WTC11 (cell line): ENCODE measurements at regions of chr7 and their contacts with region 1.

Region 1: DNA sequence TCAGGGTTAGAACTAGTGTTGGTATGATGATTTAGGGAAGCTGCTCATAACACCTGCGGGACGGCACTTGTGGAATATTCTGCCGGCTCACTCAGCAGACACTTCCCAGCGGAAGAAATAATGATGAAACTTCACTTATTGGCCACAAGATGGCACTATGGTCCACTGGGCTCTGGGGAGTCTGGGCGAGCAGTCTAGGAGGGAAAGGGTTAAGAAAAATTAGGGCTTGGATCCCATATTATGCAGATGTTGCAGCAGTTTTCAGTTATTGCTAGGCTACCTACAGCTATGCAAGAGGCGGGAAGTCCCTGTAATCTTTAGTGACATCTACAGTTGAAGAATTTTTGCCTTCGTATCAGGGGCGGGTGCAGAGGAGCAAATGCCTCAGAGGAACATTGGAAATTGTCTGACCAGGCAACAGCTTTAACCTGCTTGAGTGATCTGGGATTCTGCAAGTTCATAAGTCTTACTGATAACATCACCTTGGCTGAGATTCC is 238.7 kb upstream of the PRSS58 start:
- DNase-seq: no peak
- ATAC-seq: peak; percentile 82
- H3K4me3 Mint-ChIP-seq: peak overlapping the region; percentile 45
- H3K27ac Mint-ChIP-seq: no peak overlapping the region
- H3K4me1 Mint-ChIP-seq: no peaks in the 10 kb centered on the region
- H3K27me3 Mint-ChIP-seq: peaks cover 17% of the 10 kb centered on the region
- CTCF ChIP-seq: peak; percentile 74

Region 2: GRCh38 chr7:142478479-142479072 is 18.0 kb before region 1 on chr7:
- CTCF ChIA-PET with region 1: interaction called, 14 read pairs
- POLR2A ChIA-PET with region 1: no interaction called
- DNase-seq: peak; percentile 38
- ATAC-seq: peak; percentile 79
- H3K4me3 Mint-ChIP-seq: no peak overlapping the region
- H3K27ac Mint-ChIP-seq: no peak overlapping the region
- H3K4me1 Mint-ChIP-seq: peaks cover 11% of the 10 kb centered on the region
- H3K27me3 Mint-ChIP-seq: peaks cover 12% of the 10 kb centered on the region
- CTCF ChIP-seq: peak; percentile 62

Region 3: DNA sequence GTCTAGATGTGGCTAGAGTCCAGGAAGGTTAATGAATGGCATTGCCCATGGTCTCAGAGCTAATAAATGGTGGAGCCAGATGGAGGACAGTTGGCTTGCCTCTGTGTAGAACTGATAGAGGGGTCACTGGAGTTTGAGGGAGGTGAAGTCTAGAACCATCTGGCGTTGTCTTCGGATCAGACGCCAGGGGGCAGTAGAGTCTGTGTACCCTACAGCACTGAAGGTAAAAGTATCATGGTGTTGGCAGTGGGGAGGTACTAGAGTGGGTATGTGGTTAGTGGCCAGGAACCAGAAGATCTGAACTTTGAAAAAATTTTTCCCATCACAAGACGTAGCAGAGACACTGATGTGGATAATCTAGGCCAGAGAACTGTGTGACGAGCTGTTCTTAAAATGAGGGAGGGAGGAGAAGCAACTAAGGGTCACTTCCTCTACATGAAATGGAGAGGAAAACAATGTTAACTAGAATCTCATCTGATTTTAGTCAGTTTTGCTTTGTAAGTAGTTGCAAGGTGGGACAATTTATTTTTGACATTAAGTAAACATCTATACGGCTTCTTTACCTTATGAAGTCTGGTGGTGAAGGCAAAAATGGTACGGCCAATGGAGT is 10.9 kb before region 1 on chr7:
- CTCF ChIA-PET with region 1: interaction called, 10 read pairs
- POLR2A ChIA-PET with region 1: no interaction called
- DNase-seq: peak; percentile 63
- ATAC-seq: peak; percentile 69
- H3K4me3 Mint-ChIP-seq: no peak overlapping the region
- H3K27ac Mint-ChIP-seq: no peak overlapping the region
- H3K4me1 Mint-ChIP-seq: peaks cover 13% of the 10 kb centered on the region; the same call in 1 of the 2 replicates
- H3K27me3 Mint-ChIP-seq: no peaks in the 10 kb centered on the region
- CTCF ChIP-seq: peak; percentile 70

Region 4: DNA sequence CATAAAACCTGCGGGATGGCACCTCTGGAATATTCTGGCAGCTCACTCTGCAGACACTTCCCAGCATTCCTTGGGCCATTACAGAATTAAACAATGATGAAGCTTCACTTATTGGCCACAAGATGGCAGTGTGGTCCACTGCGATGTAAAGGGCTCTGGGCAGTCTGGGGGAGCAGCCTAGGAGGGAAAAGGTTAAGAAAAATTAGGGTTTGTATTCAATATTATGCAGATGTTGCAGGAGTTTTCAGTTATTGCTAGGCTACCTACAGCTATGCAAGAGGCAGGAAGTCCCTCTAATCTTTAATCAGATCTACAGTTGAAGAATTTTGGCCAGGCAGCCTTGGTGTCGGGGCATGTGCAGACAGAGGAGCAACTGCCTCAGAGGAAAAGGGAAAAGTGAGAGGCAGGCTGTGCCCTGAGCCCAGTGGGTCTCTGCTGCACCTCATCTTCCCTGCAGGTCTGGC is 19.5 kb after region 1 on chr7:
- CTCF ChIA-PET with region 1: interaction called, 50 read pairs
- POLR2A ChIA-PET with region 1: no interaction called
- DNase-seq: peak; percentile 26
- ATAC-seq: peak; percentile 92
- H3K4me3 Mint-ChIP-seq: no peak overlapping the region
- H3K27ac Mint-ChIP-seq: no peak overlapping the region
- H3K4me1 Mint-ChIP-seq: peaks cover 9% of the 10 kb centered on the region
- H3K27me3 Mint-ChIP-seq: peaks cover 5% of the 10 kb centered on the region; the same call in 1 of the 2 replicates
- CTCF ChIP-seq: peak; percentile 41; the same call in 1 of the 2 replicates